ENCODE measurements at regions of chr1 and their contacts with region 1.

Region 1: GRCh38 chr1:111214074-111214801 is 13.3 kb upstream of the CHI3L2 start:
- DNase-seq: no peak
- ATAC-seq: no peak
- H3K4me3 ChIP-seq: peak overlapping the region; percentile 12
- H3K4me3 Mint-ChIP-seq: peak overlapping the region; percentile 60 to 88 (median 81)
- H3K27ac ChIP-seq: peak overlapping the region; percentile 75
- H3K27ac Mint-ChIP-seq: peak overlapping the region; percentile 94 to 100 (median 97)
- H3K4me1 ChIP-seq: peaks cover 65 to 67% of the 10 kb centered on the region in 2 donors
- H3K4me1 Mint-ChIP-seq: peaks cover 66 to 98% (median 93%) of the 10 kb centered on the region in 7 donors
- H3K27me3 ChIP-seq: no peaks in the 10 kb centered on the region
- H3K27me3 Mint-ChIP-seq: peaks cover 0 to 2% (median 0%) of the 10 kb centered on the region in 5 donors

Region 2: DNA sequence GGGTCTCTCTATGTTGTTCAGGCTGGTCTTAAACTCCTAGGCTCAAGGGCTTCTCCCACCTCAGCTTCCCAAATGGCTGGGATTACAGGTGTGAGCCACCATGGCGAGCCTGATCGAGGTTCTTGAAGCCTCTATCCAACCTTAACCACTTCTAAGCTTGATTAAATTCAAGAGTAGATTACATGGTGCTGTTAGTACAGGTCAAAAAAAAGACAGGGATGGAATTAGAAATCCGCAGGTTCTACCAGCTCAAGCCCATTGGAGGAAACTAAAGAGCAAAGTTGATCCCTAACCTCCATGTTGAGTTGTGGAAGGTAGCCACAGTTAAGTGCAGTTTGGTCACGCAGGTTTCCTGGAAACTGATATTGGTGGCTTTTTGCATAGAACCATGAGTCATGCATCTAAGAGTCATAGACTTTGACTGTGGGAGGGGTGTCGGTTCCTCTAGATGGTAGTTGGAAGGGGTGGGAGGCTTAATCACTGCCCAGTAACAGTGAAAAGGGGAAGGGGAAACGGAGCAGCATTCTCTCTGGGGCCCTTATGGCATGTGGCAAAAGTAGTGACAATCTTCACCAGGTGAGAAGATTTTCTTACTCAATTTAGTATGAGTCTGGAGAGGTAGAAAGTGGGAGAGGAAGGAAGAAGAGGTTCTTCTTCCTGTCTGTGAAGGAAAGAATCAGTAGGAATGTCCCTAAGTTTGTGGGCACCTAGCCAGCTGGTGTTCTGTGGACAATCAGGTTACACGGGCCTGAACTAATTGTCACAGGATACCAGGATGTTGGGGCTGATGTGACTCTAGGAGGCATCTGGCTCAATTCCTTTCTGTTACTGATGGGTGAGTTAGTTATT is 334.3 kb before region 1 on chr1:
- CTCF ChIA-PET with region 1: no interaction called
- POLR2A ChIA-PET with region 1: no interaction called
- intact Hi-C with region 1: loop called in 1 of 2 experiments (anchors 2 kb)
- DNase-seq: peak in 2 of 9 donors; percentile 63 to 65
- ATAC-seq: peak; percentile 73
- H3K4me3 ChIP-seq: peak overlapping the region; percentile 41
- H3K4me3 Mint-ChIP-seq: peak overlapping the region; percentile 78 to 96 (median 88)
- H3K27ac ChIP-seq: peak overlapping the region; percentile 44
- H3K27ac Mint-ChIP-seq: peak overlapping the region; percentile 89 to 99 (median 93)
- H3K4me1 ChIP-seq: peaks cover 69 to 77% of the 10 kb centered on the region in 2 donors
- H3K4me1 Mint-ChIP-seq: peaks cover 71 to 96% (median 85%) of the 10 kb centered on the region in 7 donors
- H3K27me3 ChIP-seq: no peaks in the 10 kb centered on the region
- H3K27me3 Mint-ChIP-seq: no peaks in the 10 kb centered on the region

Region 3: GRCh38 chr1:111139956-111140679 is 74.1 kb before region 1 on chr1 and contains the starts of genes CEPT1 and DRAM2:
- CTCF ChIA-PET with region 1: interaction called, 5 read pairs
- POLR2A ChIA-PET with region 1: interaction called, 34 read pairs
- intact Hi-C with region 1: loop called in 1 of 2 experiments (anchors 1 kb)
- DNase-seq: peak; percentile 77 to 93 (median 89)
- ATAC-seq: peak; percentile 95
- H3K4me3 ChIP-seq: peak within 1 kb of the TSS; percentile 91
- H3K4me3 Mint-ChIP-seq: peak within 1 kb of the TSS; percentile 87 to 100 (median 98)
- H3K27ac ChIP-seq: peak within 1 kb of the TSS; percentile 93
- H3K27ac Mint-ChIP-seq: peak within 1 kb of the TSS; percentile 91 to 100 (median 97)
- H3K4me1 ChIP-seq: peaks cover 18 to 22% of the 10 kb centered on the region in 2 donors
- H3K4me1 Mint-ChIP-seq: peaks cover 40 to 75% (median 57%) of the 10 kb centered on the region in 7 donors
- H3K27me3 ChIP-seq: no peaks in the 10 kb centered on the region
- H3K27me3 Mint-ChIP-seq: no peaks in the 10 kb centered on the region
- total RNA-seq, gene CEPT1: 39.1 to 57.5 (median 40.2) TPM
- total RNA-seq, gene DRAM2: 26.9 to 51.6 (median 43.5) TPM

Region 4: GRCh38 chr1:111203681-111204200 is 10.5 kb before region 1 on chr1:
- CTCF ChIA-PET with region 1: interaction called, 341 read pairs
- POLR2A ChIA-PET with region 1: interaction called, 1,128 read pairs
- intact Hi-C with region 1: loop called (anchors 1 kb)
- DNase-seq: peak; percentile 51 to 86 (median 82)
- ATAC-seq: peak; percentile 71
- H3K4me3 ChIP-seq: peak overlapping the region; percentile 84
- H3K4me3 Mint-ChIP-seq: peak overlapping the region; percentile 90 to 100 (median 99)
- H3K27ac ChIP-seq: peak overlapping the region; percentile 90
- H3K27ac Mint-ChIP-seq: peak overlapping the region; percentile 80 to 99 (median 96)
- H3K4me1 ChIP-seq: peaks cover 30 to 32% of the 10 kb centered on the region in 2 donors
- H3K4me1 Mint-ChIP-seq: peaks cover 32 to 76% (median 61%) of the 10 kb centered on the region in 7 donors
- H3K27me3 ChIP-seq: no peaks in the 10 kb centered on the region
- H3K27me3 Mint-ChIP-seq: no peaks in the 10 kb centered on the region